HepG2 (cell line): ENCODE measurements at regions of chr6 and their contacts with region 1.

Region 1: DNA sequence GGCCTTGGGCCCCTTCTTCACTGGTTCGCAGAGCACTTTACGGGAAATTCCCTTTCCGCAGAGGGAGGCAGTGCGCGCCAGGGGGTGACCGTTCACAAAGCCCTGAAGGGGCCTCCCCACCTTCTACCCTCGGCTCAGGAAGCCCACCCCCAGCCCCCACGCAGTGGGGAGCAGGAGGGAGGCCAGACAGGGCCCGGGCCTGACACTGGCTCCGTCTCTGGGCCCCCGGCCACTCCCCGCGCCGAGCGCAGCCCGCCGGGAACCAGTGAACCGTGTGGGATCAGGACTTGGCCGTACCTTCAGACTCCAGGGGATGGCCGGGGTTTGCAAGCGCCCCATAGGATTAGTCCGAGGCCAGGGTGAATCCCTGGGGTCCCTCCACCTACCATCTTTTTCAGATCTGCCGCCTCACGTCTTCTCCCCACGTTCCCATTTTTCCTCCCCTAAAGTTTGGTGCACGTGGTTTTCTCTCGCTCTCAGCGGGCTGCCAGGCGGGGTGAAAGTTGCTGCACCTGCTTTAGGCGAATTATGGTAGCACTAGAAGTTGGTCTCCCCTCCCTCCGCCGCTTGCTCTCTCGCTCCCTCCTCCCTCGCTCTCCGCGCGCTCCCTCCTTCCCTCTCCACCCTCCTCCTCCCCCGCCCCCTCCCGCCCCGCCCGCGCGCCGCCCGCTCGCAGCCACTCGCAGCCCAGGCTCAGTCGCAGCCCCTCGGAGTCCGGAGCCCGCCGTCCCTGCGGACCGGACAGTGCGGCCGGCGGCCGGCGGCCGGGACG is at the start of gene FOXP4:
- DNase-seq: peak; percentile 91
- ATAC-seq: peak; percentile 75
- H3K4me3 ChIP-seq: peak within 1 kb of the TSS; percentile 67 to 99 (median 99)
- H3K27ac ChIP-seq: peak within 1 kb of the TSS; percentile 66
- H3K4me1 ChIP-seq: peaks cover 48% of the 10 kb centered on the region
- H3K27me3 ChIP-seq: no peaks in the 10 kb centered on the region
- CTCF ChIP-seq: 0 out of 2 replicates have a peak, but pooled peaks have one; percentile 8
- EP300 ChIP-seq: 0 out of 4 replicates have a peak, but pooled peaks of 1 of the 2 experiments have one; percentile 43
- POLR2A ChIP-seq: no peak
- RAD21 ChIP-seq: peak; percentile 47; the same call in 1 of the 2 replicates
- total RNA-seq, gene FOXP4: 11.0 TPM in 2 replicates

Region 2: GRCh38 chr6:41497994-41498393 is 47.9 kb before region 1 on chr6:
- CTCF ChIA-PET with region 1: no interaction called
- POLR2A ChIA-PET with region 1: interaction called, 9 read pairs
- in situ Hi-C with region 1: no loop called
- intact Hi-C with region 1: loop called (anchors 2 kb)
- DNase-seq: no peak
- ATAC-seq: no peak
- H3K4me3 ChIP-seq: no peak overlapping the region
- H3K27ac ChIP-seq: no peak overlapping the region
- H3K4me1 ChIP-seq: peaks cover 88% of the 10 kb centered on the region
- H3K27me3 ChIP-seq: no peaks in the 10 kb centered on the region; a peak in 1 of 5 replicates
- CTCF ChIP-seq: no peak
- EP300 ChIP-seq: no peak
- POLR2A ChIP-seq: no peak
- RAD21 ChIP-seq: no peak

Region 3: DNA sequence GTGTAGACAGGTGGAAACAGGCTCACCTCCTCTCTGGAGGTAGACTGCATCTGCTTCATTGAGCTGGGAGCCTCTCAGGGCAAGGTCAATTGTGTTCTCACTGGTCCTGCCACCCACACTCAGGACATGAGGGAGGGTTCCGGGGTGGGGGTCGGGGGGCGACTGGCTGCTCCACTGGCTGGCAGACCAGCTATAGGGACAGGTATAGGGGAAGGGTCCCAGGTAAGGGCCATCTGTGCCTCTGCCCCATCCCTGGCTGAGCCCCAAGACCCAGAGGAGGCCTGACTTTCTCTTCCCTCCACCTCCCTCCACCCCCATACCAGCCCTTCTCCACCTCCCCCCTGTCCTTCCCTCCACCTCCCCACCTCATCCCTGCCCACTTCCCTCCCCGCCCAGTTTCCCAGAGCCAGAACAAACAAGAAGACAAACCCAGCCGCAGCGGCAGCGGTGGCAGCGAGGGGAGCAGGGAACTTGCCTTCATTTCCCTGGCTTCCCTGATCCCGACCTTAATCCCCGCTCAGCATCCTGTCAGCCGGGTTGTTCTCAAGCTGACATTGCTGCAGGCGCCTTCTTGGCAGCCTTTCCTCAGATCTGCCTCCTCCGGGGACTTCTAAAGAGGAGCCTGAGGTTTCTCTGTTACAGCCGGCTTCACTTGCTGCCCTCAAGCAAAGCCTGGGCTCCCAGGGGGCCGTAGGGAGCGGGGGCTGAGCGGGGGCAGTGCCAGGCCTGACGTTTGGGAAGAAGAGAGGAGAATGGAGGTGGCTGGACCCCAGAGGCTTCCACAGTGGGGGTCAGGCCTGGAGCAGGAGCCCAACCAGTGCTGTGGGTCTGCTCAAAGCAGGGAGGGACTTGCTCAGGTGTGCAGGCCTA is 17.9 kb before region 1 on chr6:
- CTCF ChIA-PET with region 1: no interaction called
- POLR2A ChIA-PET with region 1: interaction called, 10 read pairs
- in situ Hi-C with region 1: no loop called
- intact Hi-C with region 1: loop called (anchors 2 kb)
- DNase-seq: peak; percentile 41
- ATAC-seq: peak; percentile 22
- H3K4me3 ChIP-seq: peak overlapping the region; percentile 23 to 49 (median 25); a peak in 2 of 6 replicates
- H3K27ac ChIP-seq: peak overlapping the region; percentile 18
- H3K4me1 ChIP-seq: peaks cover 70% of the 10 kb centered on the region
- H3K27me3 ChIP-seq: no peaks in the 10 kb centered on the region
- CTCF ChIP-seq: no peak
- EP300 ChIP-seq: no peak
- POLR2A ChIP-seq: no peak
- RAD21 ChIP-seq: no peak

Region 4: DNA sequence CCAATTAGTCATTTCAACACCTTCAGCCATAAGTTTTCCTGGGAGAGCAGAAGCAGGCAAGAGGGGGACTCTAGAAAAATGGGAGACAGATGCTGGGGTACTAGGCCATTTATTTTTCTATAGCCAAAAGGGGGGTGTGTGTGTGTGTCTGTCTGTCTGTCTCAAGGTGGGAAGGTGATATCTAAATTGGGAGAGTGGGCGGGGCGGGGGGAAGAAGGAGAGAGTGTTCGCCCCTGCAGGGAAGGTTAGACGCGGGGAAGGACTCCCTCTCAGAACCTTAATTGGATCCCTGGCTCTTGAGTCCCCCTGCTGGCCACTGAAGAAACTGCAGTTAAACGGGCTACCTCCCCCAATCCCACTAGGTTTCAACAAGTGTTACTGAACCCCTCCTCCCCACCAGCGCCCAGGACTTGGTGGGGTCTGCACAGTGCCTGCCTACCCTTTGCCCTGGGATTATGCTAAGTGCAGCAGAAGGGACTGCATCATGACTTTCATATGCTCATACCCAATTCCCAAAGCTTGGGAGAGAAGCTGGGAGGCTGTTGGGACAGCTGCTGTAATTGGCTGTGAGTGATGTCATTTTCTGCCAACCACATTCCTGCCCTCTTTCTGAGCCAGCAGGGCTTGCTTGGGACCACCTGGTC is 46.1 kb after region 1 on chr6:
- CTCF ChIA-PET with region 1: interaction called, 5 read pairs
- POLR2A ChIA-PET with region 1: interaction called, 3 read pairs
- in situ Hi-C with region 1: loop called (anchors 5 kb)
- intact Hi-C with region 1: loop called (anchors 2 kb)
- DNase-seq: peak; percentile 65
- ATAC-seq: peak; percentile 73
- H3K4me3 ChIP-seq: no peak overlapping the region
- H3K27ac ChIP-seq: no peak overlapping the region
- H3K4me1 ChIP-seq: peaks cover 19% of the 10 kb centered on the region
- H3K27me3 ChIP-seq: no peaks in the 10 kb centered on the region
- CTCF ChIP-seq: peak; percentile 95
- EP300 ChIP-seq: no peak
- POLR2A ChIP-seq: no peak
- RAD21 ChIP-seq: peak; percentile 97